ENCODE measurements at regions of chr3 and their contacts with region 1.

Region 1: DNA sequence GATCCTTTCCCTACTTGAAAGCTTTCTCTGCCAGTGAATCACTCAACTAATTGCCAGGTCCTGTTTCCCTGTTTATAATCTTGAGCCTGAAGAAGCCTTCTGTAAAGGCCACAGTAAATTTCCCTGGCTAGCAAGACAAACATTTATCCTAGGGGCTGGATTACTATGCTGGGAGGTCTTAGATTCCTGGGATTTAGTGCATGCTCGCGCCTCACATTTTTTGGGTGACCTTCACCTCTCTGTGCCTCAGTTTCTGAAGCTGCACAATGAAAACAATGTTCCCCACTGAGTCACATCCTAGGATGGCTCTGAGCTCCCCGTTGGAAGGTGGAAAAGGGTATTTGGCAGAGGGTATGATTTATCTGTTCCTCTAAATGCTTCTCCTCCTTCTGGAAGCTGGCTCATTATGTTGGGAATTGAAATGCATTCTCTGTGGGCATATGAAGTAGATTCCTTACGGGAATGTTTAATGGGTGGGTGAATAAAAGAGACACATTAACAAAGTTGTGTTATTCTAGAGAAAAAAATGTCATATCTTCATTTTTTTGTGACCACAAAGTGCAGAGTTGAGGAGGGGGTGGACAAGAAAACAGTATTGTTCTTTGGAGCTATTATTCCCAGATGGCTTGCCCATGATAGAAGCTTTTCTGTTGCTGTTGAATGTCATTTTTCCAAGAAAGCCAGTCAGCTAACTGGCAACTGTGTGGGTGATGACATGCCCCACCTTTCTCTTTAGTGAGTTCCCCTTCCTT is 32.4 kb downstream of the LSM3 start:
- DNase-seq: peak; percentile 87
- ATAC-seq: peak; percentile 58
- H3K4me3 ChIP-seq: no peak overlapping the region
- H3K27ac ChIP-seq: peak overlapping the region; percentile 97
- H3K4me1 ChIP-seq: peaks cover 33% of the 10 kb centered on the region
- H3K27me3 ChIP-seq: no peaks in the 10 kb centered on the region
- CTCF ChIP-seq: no peak
- POLR2A ChIP-seq: no peak
- RAD21 ChIP-seq: no peak

Region 2: GRCh38 chr3:14057701-14058100 is 153.3 kb before region 1 on chr3:
- CTCF ChIA-PET with region 1: no interaction called
- POLR2A ChIA-PET with region 1: no interaction called
- dilution Hi-C with region 1: no loop called
- in situ Hi-C with region 1: no loop called
- intact Hi-C with region 1: no loop called
- DNase-seq: no peak
- ATAC-seq: no peak
- H3K4me3 ChIP-seq: no peak overlapping the region
- H3K27ac ChIP-seq: no peak overlapping the region
- H3K4me1 ChIP-seq: no peaks in the 10 kb centered on the region
- H3K27me3 ChIP-seq: no peaks in the 10 kb centered on the region
- CTCF ChIP-seq: no peak
- POLR2A ChIP-seq: no peak
- RAD21 ChIP-seq: no peak

Region 3: GRCh38 chr3:14289590-14290461 is 78.8 kb after region 1 on chr3:
- CTCF ChIA-PET with region 1: no interaction called
- POLR2A ChIA-PET with region 1: no interaction called
- dilution Hi-C with region 1: no loop called
- in situ Hi-C with region 1: no loop called
- intact Hi-C with region 1: loop called (anchors 2 kb)
- DNase-seq: peak; percentile 96
- ATAC-seq: peak; percentile 98
- H3K4me3 ChIP-seq: no peak overlapping the region
- H3K27ac ChIP-seq: no peak overlapping the region
- H3K4me1 ChIP-seq: peaks cover 8% of the 10 kb centered on the region; the same call in 1 of the 2 replicates
- H3K27me3 ChIP-seq: peaks cover 7% of the 10 kb centered on the region
- CTCF ChIP-seq: no peak
- POLR2A ChIP-seq: no peak
- RAD21 ChIP-seq: no peak

Region 4: GRCh38 chr3:14452679-14453367 is 241.8 kb after region 1 on chr3:
- CTCF ChIA-PET with region 1: no interaction called
- POLR2A ChIA-PET with region 1: interaction called, 13 read pairs
- dilution Hi-C with region 1: no loop called
- in situ Hi-C with region 1: no loop called
- intact Hi-C with region 1: no loop called
- DNase-seq: peak; percentile 98
- ATAC-seq: peak; percentile 87
- H3K4me3 ChIP-seq: no peak overlapping the region
- H3K27ac ChIP-seq: peak overlapping the region; percentile 87
- H3K4me1 ChIP-seq: peaks cover 22% of the 10 kb centered on the region
- H3K27me3 ChIP-seq: no peaks in the 10 kb centered on the region
- CTCF ChIP-seq: 0 out of 2 replicates have a peak, but pooled peaks have one; percentile 21
- POLR2A ChIP-seq: peak; percentile 75
- RAD21 ChIP-seq: no peak; the same call in 1 of the 2 replicates

Region 5: GRCh38 chr3:15974647-15975046 is 1763.6 kb after region 1 on chr3:
- CTCF ChIA-PET with region 1: no interaction called
- POLR2A ChIA-PET with region 1: no interaction called
- dilution Hi-C with region 1: no loop called
- in situ Hi-C with region 1: no loop called
- intact Hi-C with region 1: no loop called
- DNase-seq: no peak
- ATAC-seq: no peak
- H3K4me3 ChIP-seq: no peak overlapping the region
- H3K27ac ChIP-seq: no peak overlapping the region
- H3K4me1 ChIP-seq: peaks cover 5% of the 10 kb centered on the region; the same call in 1 of the 2 replicates
- H3K27me3 ChIP-seq: no peaks in the 10 kb centered on the region
- CTCF ChIP-seq: no peak
- POLR2A ChIP-seq: no peak
- RAD21 ChIP-seq: no peak